GM23248 (cell line): ENCODE measurements at regions of chr17 and their contacts with region 1.

Region 1: DNA sequence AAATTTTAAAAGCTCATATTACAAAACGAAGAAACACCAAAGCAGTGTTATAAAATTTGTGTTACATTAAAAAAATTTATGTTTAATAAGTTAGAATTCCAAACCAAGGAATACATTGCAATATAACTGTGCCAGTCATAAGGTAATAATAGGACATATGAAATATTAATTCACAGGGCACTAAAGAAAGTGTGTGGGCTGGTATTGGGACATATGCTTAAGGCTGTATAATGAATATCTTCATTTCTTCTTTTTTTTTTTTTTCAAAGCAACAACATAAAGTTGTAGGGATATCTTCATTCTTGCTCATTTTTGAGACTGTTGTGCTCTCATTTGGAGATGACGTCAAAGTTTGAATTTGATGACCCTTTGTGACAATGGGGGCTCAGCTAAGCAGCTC is 17.5 kb upstream of the FBXO47 start:
- DNase-seq: no peak
- H3K4me3 ChIP-seq: no peak overlapping the region
- H3K27ac ChIP-seq: no peak overlapping the region
- H3K4me1 ChIP-seq: peaks cover 20% of the 10 kb centered on the region
- H3K27me3 ChIP-seq: no peaks in the 10 kb centered on the region

Region 2: GRCh38 chr17:39153599-39154051 is 169.0 kb after region 1 on chr17:
- in situ Hi-C with region 1: loop called (anchors 5 kb)
- DNase-seq: peak; percentile 86
- H3K4me3 ChIP-seq: peak overlapping the region; percentile 99
- H3K27ac ChIP-seq: peak overlapping the region; percentile 72
- H3K4me1 ChIP-seq: no peaks in the 10 kb centered on the region
- H3K27me3 ChIP-seq: no peaks in the 10 kb centered on the region; the same call in 1 of the 2 replicates